Activated CD4-positive, alpha-beta T cell treated with anti-CD3 and anti-CD28 coated beads, Interleukin-2, amount 10 ng/mL, durations not matched to agents 7 days and 5 days (primary cell): ENCODE measurements at regions of chr9 and their contacts with region 1.

Region 1: GRCh38 chr9:89549031-89549644 is 51.2 kb upstream of the SEMA4D start:
- DNase-seq: peak; percentile 86
- H3K4me3 Mint-ChIP-seq: no peak overlapping the region
- H3K27ac Mint-ChIP-seq: peak overlapping the region; percentile 76
- H3K4me1 Mint-ChIP-seq: peaks cover 17% of the 10 kb centered on the region
- H3K27me3 Mint-ChIP-seq: peaks cover 3% of the 10 kb centered on the region

Region 2: GRCh38 chr9:89410641-89411350 is 138.3 kb before region 1 on chr9:
- CTCF ChIA-PET with region 1: interaction called, 14 read pairs
- POLR2A ChIA-PET with region 1: interaction called, 3 read pairs
- DNase-seq: no peak
- H3K4me3 Mint-ChIP-seq: peak overlapping the region; percentile 55
- H3K27ac Mint-ChIP-seq: peak overlapping the region; percentile 87
- H3K4me1 Mint-ChIP-seq: peaks cover 91% of the 10 kb centered on the region
- H3K27me3 Mint-ChIP-seq: no peaks in the 10 kb centered on the region

Region 3: GRCh38 chr9:89428901-89429890 is 119.9 kb before region 1 on chr9:
- CTCF ChIA-PET with region 1: interaction called, 42 read pairs
- POLR2A ChIA-PET with region 1: interaction called, 3 read pairs
- DNase-seq: peak; percentile 65
- H3K4me3 Mint-ChIP-seq: no peak overlapping the region
- H3K27ac Mint-ChIP-seq: peak overlapping the region; percentile 83
- H3K4me1 Mint-ChIP-seq: peaks cover 89% of the 10 kb centered on the region
- H3K27me3 Mint-ChIP-seq: no peaks in the 10 kb centered on the region

Region 4: DNA sequence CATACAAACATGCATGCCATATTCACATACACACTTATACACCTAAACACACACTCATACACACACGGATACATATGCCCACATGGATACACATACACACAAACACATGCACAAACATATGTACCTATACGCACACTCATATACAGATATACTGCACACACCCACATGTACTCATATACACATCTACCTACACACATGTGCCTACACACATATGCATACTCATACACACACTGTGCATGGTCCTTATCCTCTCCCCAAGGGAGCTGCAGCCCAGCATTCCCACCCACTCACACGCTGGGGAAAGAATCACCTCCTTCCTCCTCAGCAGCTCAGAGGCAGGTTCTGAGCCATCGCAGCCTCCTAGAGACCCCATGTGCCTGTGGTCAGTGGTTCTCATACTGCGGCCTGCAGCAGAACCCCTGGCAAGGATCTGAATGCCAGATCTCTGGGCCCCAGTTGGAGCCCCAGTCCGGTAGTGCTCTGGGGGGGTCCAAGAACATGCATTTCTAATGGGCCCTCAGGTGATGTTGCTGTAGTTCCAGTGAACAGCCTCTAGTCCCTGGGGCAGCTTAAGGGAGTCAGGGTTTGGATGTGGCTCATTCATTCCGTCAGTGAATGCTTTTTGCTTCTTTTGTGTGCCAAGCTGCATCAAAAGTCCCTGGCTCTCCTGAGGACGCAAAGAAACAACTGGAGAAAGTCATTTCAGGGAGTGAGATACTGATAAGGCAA is 90.2 kb before region 1 on chr9:
- CTCF ChIA-PET with region 1: interaction called, 10 read pairs
- POLR2A ChIA-PET with region 1: no interaction called
- DNase-seq: no peak
- H3K4me3 Mint-ChIP-seq: no peak overlapping the region
- H3K27ac Mint-ChIP-seq: peak overlapping the region; percentile 67
- H3K4me1 Mint-ChIP-seq: peaks cover 96% of the 10 kb centered on the region
- H3K27me3 Mint-ChIP-seq: no peaks in the 10 kb centered on the region

Region 5: DNA sequence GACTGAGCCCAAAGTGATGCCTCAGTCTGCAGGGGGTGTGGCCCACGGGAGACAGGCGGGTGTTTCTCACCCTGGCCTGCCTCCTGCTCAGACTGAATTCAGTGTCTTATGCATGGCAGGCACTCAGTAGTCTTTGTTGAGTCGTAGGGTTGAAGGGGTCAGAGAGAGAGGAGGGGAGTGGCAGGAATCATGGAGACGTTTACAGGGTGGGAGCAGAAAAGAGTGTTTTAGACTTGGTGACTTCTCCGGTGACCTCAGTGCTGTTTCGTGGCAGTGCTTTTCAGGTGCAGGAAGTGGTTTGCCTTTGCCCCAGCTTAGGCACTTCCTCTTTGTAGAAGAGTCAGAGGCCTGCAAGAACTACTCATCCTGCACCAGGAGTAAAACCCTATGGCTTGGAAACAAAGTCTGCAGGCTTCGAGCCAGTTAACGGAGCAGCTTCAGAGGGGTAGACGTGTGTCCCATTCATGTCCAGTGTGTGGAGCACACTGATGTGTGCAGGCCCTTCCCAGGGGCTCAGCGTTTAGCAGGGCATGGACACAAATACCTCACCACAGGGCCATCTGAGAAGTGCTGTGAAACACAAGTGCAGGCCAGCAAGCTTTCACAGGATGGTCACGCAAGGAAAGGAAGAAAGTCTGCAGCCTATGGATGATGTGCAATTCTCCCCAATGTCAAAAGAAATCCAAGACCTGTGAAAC is 26.7 kb before region 1 on chr9:
- CTCF ChIA-PET with region 1: interaction called, 24 read pairs
- POLR2A ChIA-PET with region 1: no interaction called
- DNase-seq: peak; percentile 89
- H3K4me3 Mint-ChIP-seq: peak overlapping the region; percentile 43
- H3K27ac Mint-ChIP-seq: peak overlapping the region; percentile 93
- H3K4me1 Mint-ChIP-seq: peaks cover 96% of the 10 kb centered on the region
- H3K27me3 Mint-ChIP-seq: no peaks in the 10 kb centered on the region

Region 6: DNA sequence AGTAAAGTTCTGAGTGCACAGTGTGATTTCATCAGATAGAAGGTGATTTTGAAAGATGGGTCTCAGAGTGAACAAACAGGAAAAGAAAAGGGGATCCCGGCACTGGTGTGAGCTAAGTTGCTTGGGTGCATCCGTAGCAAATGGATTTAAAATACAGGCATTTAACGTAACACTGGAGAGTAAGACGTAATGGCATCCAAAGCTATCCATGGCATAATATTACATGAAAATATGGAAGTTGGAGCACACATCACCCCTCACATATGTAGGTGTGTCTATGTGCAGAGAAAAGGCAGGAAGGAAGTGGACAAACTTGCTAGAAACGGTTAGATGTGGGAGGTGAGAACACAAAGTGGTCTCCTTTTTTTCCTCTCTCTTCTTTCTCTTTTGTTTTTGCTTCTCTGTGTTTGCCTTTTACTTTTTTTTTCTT is 13.0 kb before region 1 on chr9:
- CTCF ChIA-PET with region 1: interaction called, 25 read pairs
- POLR2A ChIA-PET with region 1: no interaction called
- DNase-seq: peak; percentile 57
- H3K4me3 Mint-ChIP-seq: peak overlapping the region; percentile 41
- H3K27ac Mint-ChIP-seq: peak overlapping the region; percentile 93
- H3K4me1 Mint-ChIP-seq: peaks cover 89% of the 10 kb centered on the region
- H3K27me3 Mint-ChIP-seq: no peaks in the 10 kb centered on the region